ENCODE measurements at regions of chr17 and their contacts with region 1.

Region 1: GRCh38 chr17:29579866-29580771 is 9.3 kb downstream of the GIT1 start:
- DNase-seq: no peak
- H3K4me3 ChIP-seq: no peak overlapping the region
- H3K27ac ChIP-seq: peak overlapping the region in 2 of 4 donors; percentile 15 to 27
- H3K4me1 ChIP-seq: peaks cover 38 to 69% (median 61%) of the 10 kb centered on the region in 4 donors
- H3K27me3 ChIP-seq: no peaks in the 10 kb centered on the region
- CTCF ChIP-seq: peak; percentile 92 to 95 (median 93)
- EP300 ChIP-seq: no peak
- POLR2A ChIP-seq: no peak

Region 2: GRCh38 chr17:29617125-29617480 is 37.0 kb after region 1 on chr17:
- intact Hi-C with region 1: loop called (anchors 5 kb)
- DNase-seq: no peak
- H3K4me3 ChIP-seq: peak overlapping the region; percentile 38 to 55 (median 47)
- H3K27ac ChIP-seq: peak overlapping the region in 1 of 4 donors; percentile 56
- H3K4me1 ChIP-seq: peaks cover 95 to 97% (median 96%) of the 10 kb centered on the region in 4 donors
- H3K27me3 ChIP-seq: peaks cover 0 to 6% (median 0%) of the 10 kb centered on the region in 4 donors
- CTCF ChIP-seq: peak; percentile 36 to 56 (median 40)
- EP300 ChIP-seq: no peak
- POLR2A ChIP-seq: no peak

Region 3: DNA sequence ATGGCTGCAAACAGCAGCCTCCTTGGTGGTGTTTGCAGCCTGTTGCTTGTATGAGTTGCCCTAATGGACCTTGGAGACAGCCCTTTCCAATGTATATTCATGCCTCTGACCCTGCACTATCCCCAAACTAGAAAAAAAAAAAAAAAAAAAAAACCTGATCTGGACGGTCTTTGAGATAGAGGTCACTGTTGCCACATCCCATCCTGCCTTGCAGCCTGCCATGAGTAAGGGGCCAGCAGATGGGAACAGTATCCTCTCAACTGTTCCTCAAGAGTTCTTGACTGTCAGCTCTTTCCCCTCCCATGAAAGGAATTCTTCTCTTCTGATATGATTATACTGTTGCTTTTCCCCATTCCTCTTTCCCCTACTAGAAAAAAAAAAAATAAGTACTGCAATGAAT is 197.5 kb after region 1 on chr17:
- intact Hi-C with region 1: loop called (anchors 2 kb)
- DNase-seq: peak; percentile 42
- H3K4me3 ChIP-seq: no peak overlapping the region
- H3K27ac ChIP-seq: no peak overlapping the region
- H3K4me1 ChIP-seq: peaks cover 7 to 9% (median 8%) of the 10 kb centered on the region in 4 donors
- H3K27me3 ChIP-seq: no peaks in the 10 kb centered on the region
- CTCF ChIP-seq: no peak
- EP300 ChIP-seq: no peak
- POLR2A ChIP-seq: no peak

Region 4: GRCh38 chr17:30273373-30273772 is 693.3 kb after region 1 on chr17:
- intact Hi-C with region 1: no loop called
- DNase-seq: no peak
- H3K4me3 ChIP-seq: no peak overlapping the region
- H3K27ac ChIP-seq: no peak overlapping the region
- H3K4me1 ChIP-seq: peaks cover 0 to 4% (median 0%) of the 10 kb centered on the region in 4 donors
- H3K27me3 ChIP-seq: no peaks in the 10 kb centered on the region
- CTCF ChIP-seq: no peak
- EP300 ChIP-seq: no peak
- POLR2A ChIP-seq: no peak